ENCODE measurements at regions of chr16 and their contacts with region 1.

Region 1: GRCh38 chr16:20900299-20901067 is at the starts of genes DCUN1D3 and LYRM1:
- DNase-seq: peak; percentile 99
- ATAC-seq: peak; percentile 92
- H3K4me3 ChIP-seq: peak within 1 kb of the TSS; percentile 83 to 95 (median 87)
- H3K27ac ChIP-seq: peak within 1 kb of the TSS; percentile 94
- H3K4me1 ChIP-seq: peaks cover 76% of the 10 kb centered on the region
- H3K27me3 ChIP-seq: no peaks in the 10 kb centered on the region; a peak in 1 of 5 replicates
- CTCF ChIP-seq: peak; percentile 14
- EP300 ChIP-seq: peak; percentile 48 to 69; a peak in 3 of 4 replicates
- POLR2A ChIP-seq: peak; percentile 70 to 88; a peak in 3 of 4 replicates
- RAD21 ChIP-seq: peak; percentile 40
- total RNA-seq, gene DCUN1D3: 19.3 and 26.1 TPM in 2 replicates
- total RNA-seq, gene LYRM1: 82.6 and 106 TPM in 2 replicates

Region 2: DNA sequence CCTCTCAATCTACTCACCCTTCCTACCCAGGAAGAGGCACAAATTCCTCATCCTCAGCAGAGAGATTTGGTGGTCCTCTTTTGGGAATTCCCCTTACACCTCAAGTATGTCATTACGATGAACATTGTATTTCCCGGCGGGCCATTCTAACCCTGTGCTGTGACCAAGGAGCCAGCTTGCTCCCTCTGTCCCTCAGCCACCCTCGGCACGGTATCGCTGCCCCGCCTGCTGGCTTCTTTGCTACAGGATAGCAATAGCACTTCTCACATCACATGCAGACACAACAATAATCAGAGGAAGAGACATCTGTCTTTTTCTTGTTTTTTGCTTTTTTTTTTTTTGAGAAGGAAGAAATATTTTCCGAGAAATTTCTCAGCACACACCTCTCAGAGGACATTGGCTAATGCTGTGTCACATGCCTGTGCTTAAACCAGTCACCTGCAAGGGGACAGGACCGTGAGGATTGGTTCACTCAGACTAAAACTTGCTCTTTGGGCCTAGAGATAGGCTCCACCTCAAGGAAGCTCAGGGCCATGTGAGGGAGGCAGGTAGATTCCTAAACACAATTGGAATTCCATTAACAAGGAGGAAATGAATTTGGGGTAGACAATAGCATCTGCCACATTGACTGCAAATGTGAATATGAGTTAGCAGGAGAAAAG is 1441.6 kb before region 1 on chr16:
- CTCF ChIA-PET with region 1: no interaction called
- POLR2A ChIA-PET with region 1: no interaction called
- in situ Hi-C with region 1: no loop called
- intact Hi-C with region 1: loop called (anchors 5 kb)
- DNase-seq: no peak
- ATAC-seq: peak; percentile 90
- H3K4me3 ChIP-seq: peak overlapping the region in 2 of 3 experiments; percentile 26 to 39; a peak in 4 of 6 replicates
- H3K27ac ChIP-seq: no peak overlapping the region
- H3K4me1 ChIP-seq: peaks cover 10% of the 10 kb centered on the region
- H3K27me3 ChIP-seq: peaks cover 4 to 22% of the 10 kb centered on the region in 2 experiments; a peak in 2 of 5 replicates
- CTCF ChIP-seq: peak; percentile 67
- EP300 ChIP-seq: no peak
- POLR2A ChIP-seq: no peak
- RAD21 ChIP-seq: no peak

Region 3: DNA sequence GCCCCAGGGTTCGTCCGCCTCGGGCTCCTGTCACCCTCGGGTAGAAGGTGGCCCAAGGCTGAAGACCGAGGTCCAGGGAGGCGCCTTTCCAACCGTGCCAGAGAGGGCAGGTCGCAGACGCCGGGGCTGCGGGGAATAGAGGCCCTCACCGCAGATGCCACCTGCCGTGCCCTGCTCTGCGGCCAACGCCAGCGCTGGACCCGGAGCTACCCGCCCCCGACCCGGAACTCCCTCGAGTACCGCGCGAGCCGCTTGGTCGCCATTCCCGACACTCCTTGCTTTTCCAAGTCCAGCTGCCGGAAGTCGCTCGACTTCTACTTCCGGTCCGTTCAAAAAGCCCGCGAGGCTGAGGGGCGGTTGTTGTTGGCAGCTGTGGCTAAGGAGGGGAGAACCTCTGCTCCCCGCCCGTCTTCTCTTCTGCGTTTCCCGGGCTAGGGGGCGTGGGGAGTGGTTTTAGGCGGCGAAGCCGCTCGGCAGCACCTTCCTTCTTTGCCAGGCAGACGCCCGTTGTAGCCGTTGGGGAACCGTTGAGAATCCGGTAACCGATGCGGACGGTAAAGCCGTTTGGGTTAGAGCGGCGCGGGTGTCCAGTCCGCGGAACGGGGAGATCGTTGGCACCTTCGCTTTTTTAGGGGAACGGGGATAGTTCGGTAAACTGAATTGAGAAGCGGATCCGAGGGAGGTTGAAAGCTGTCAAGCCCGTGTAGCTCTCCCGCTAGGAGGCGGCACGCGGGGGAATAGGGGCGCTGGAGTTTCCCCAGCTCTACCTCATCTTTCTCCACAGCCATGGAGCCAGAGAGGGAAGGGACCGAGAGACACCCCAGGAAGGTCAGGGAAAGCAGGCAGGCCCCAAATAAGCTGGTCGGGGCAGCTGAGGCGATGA is 94.1 kb before region 1 on chr16 and contains the starts of genes ERI2 and REXO5:
- CTCF ChIA-PET with region 1: no interaction called
- POLR2A ChIA-PET with region 1: interaction called, 17 read pairs
- in situ Hi-C with region 1: no loop called
- intact Hi-C with region 1: no loop called
- DNase-seq: peak; percentile 98
- ATAC-seq: peak; percentile 89
- H3K4me3 ChIP-seq: peak within 1 kb of the TSS; percentile 72 to 98 (median 87)
- H3K27ac ChIP-seq: peak within 1 kb of the TSS; percentile 87
- H3K4me1 ChIP-seq: peaks cover 40% of the 10 kb centered on the region
- H3K27me3 ChIP-seq: no peaks in the 10 kb centered on the region; a peak in 1 of 5 replicates
- CTCF ChIP-seq: peak; percentile 81
- EP300 ChIP-seq: peak; percentile 37 to 52; a peak in 1 of 4 replicates
- POLR2A ChIP-seq: peak; percentile 91 to 93
- RAD21 ChIP-seq: peak; percentile 59
- total RNA-seq, gene ERI2: 41.3 and 53.1 TPM in 2 replicates
- total RNA-seq, gene REXO5: 13.1 and 14.4 TPM in 2 replicates

Region 4: DNA sequence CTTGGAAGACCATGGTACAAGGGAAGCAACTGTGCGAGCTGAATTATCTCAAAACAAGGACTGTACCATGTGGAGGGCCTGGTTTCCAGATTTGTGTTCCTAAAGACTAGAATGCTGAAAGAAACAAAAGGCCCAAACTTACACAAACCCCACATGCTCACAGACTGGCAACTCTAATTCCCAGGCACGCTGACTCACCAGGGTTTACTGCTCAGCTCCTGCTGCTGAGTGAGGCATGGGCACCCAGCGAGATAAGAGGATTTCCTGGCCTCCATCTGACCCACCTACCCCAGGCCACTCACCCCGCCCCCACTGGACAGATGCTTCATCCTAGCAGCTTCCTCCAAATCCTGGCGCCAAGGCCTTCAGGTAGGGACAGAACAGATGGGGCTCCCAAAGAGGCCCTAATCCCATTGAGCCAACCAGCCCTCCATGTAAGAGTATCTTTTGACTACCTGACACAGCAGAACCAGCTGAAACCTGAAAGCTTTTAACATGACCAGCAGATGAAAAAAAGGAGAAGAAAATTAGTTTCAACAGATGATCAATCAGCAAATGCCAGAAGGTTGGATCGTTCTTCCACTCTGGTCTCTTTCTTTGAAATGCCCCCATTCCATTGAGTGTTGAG is 34.2 kb before region 1 on chr16:
- CTCF ChIA-PET with region 1: no interaction called
- POLR2A ChIA-PET with region 1: interaction called, 13 read pairs
- in situ Hi-C with region 1: no loop called
- intact Hi-C with region 1: no loop called
- DNase-seq: peak; percentile 55
- ATAC-seq: peak; percentile 15; the same call in 1 of the 3 replicates
- H3K4me3 ChIP-seq: no peak overlapping the region
- H3K27ac ChIP-seq: peak overlapping the region; percentile 33
- H3K4me1 ChIP-seq: peaks cover 47% of the 10 kb centered on the region
- H3K27me3 ChIP-seq: no peaks in the 10 kb centered on the region
- CTCF ChIP-seq: no peak
- EP300 ChIP-seq: no peak
- POLR2A ChIP-seq: no peak
- RAD21 ChIP-seq: no peak

Region 5: GRCh38 chr16:20874088-20874581 is 26.3 kb before region 1 on chr16:
- CTCF ChIA-PET with region 1: no interaction called
- POLR2A ChIA-PET with region 1: interaction called, 20 read pairs
- in situ Hi-C with region 1: no loop called
- intact Hi-C with region 1: loop called (anchors 2 kb)
- DNase-seq: no peak
- ATAC-seq: no peak
- H3K4me3 ChIP-seq: 0 out of 6 replicates have a peak overlapping the region, but pooled peaks of 1 of the 3 experiments have one; percentile 1
- H3K27ac ChIP-seq: peak overlapping the region; percentile 0
- H3K4me1 ChIP-seq: peaks cover 78% of the 10 kb centered on the region
- H3K27me3 ChIP-seq: no peaks in the 10 kb centered on the region
- CTCF ChIP-seq: no peak
- EP300 ChIP-seq: no peak
- POLR2A ChIP-seq: no peak
- RAD21 ChIP-seq: no peak

Region 6: DNA sequence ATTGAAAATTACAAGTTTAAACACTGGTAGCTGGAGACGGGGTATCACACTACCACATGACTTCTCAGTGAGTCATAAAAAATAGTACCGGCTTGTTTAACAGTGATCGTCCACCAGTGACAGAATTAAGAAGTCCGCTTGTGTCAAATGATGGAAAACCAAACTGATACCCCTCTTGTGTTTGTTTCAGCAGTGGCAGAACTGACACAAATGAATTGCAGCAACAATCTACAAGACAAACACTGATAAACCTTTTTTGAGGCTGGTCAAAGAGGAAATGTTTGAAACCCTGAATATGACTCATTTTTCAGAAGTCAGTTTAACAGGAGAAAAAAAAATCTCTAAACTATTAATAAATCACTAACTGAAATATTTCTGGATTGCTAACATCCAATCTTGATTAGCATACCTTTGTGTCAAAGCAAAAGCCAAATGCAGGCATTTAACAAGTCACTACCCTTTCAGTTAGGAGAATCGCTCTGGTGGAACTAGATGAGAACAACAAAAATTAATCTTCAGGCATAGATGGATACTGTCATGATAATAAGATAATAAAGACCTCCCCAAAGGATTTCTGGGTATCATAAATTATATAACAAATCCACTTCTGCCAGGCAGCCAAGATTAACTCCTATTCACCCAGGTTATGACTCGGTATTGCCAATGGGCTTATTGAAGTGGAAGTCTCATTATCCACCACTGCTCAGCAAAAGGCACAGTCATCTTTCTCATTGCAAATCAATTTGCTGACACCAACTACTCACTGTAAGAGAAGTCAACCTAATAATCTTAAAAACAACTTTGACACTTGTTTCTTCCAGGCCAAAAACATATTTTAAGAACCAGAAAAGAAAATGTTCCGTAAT is 21.1 kb before region 1 on chr16:
- CTCF ChIA-PET with region 1: no interaction called
- POLR2A ChIA-PET with region 1: interaction called, 20 read pairs
- in situ Hi-C with region 1: no loop called
- intact Hi-C with region 1: loop called (anchors 2 kb)
- DNase-seq: peak; percentile 57
- ATAC-seq: peak; percentile 49
- H3K4me3 ChIP-seq: peak overlapping the region in 2 of 3 experiments; percentile 27 to 36; a peak in 4 of 6 replicates
- H3K27ac ChIP-seq: peak overlapping the region; percentile 58
- H3K4me1 ChIP-seq: peaks cover 83% of the 10 kb centered on the region
- H3K27me3 ChIP-seq: no peaks in the 10 kb centered on the region
- CTCF ChIP-seq: no peak
- EP300 ChIP-seq: no peak
- POLR2A ChIP-seq: no peak
- RAD21 ChIP-seq: no peak

Region 7: DNA sequence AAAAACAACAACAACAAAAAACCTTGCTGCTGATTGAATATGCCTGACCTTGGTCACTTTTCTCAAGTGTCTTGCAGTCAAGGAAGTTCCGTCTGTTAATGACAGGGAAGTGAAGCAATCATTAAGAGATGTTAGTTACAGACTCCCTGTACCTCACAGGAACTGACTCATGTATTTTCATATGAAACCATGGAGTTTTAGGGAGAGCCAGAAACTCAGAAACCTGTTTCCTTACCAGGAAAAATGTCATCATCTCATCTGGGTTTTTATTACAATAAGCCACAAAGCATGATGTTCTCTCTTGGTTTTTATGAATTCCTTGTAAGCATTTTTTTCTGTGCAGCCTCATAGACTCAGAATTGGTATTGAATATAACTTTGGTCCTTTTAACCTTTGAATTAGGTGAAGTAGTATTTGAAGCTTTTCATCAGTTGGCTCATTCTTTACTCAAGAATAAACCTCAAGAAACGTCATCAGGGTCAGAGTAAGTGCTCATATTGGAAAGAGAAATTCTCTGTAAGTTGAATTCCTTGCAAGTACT is 10.4 kb after region 1 on chr16:
- CTCF ChIA-PET with region 1: no interaction called
- POLR2A ChIA-PET with region 1: interaction called, 17 read pairs
- in situ Hi-C with region 1: no loop called
- intact Hi-C with region 1: no loop called
- DNase-seq: no peak
- ATAC-seq: no peak
- H3K4me3 ChIP-seq: no peak overlapping the region
- H3K27ac ChIP-seq: no peak overlapping the region
- H3K4me1 ChIP-seq: peaks cover 13% of the 10 kb centered on the region
- H3K27me3 ChIP-seq: no peaks in the 10 kb centered on the region
- CTCF ChIP-seq: no peak
- EP300 ChIP-seq: no peak
- POLR2A ChIP-seq: no peak
- RAD21 ChIP-seq: no peak

Measured in HepG2 (cell line).